Psoas muscle (tissue), 8 donors: ENCODE measurements at regions of chr5 and their contacts with region 1.

Region 1: GRCh38 chr5:45454090-45454489 is 242.1 kb downstream of the HCN1 start:
- DNase-seq: peak in 1 of 2 donors; percentile 44
- ATAC-seq: peak; percentile 92 to 100 (median 98)
- H3K4me3 ChIP-seq: no peak overlapping the region
- H3K27ac ChIP-seq: no peak overlapping the region
- H3K4me1 ChIP-seq: peaks cover 5% of the 10 kb centered on the region
- H3K27me3 ChIP-seq: no peaks in the 10 kb centered on the region
- CTCF ChIP-seq: no peak

Region 2: GRCh38 chr5:45440466-45440865 is 13.6 kb before region 1 on chr5:
- intact Hi-C with region 1: loop called in 1 of 2 experiments (anchors 1 kb)
- DNase-seq: no peak
- ATAC-seq: no peak
- H3K4me3 ChIP-seq: no peak overlapping the region
- H3K27ac ChIP-seq: peak overlapping the region; percentile 13
- H3K4me1 ChIP-seq: peaks cover 7% of the 10 kb centered on the region
- H3K27me3 ChIP-seq: no peaks in the 10 kb centered on the region
- CTCF ChIP-seq: no peak

Region 3: GRCh38 chr5:45696206-45696836 is 242.2 kb after region 1 on chr5 and contains the start of gene HCN1:
- intact Hi-C with region 1: no loop called
- DNase-seq: peak; percentile 69 to 89
- ATAC-seq: peak; percentile 97 to 100 (median 99)
- H3K4me3 ChIP-seq: peak within 1 kb of the TSS; percentile 67
- H3K27ac ChIP-seq: no peak within 1 kb of the TSS
- H3K4me1 ChIP-seq: no peaks in the 10 kb centered on the region
- H3K27me3 ChIP-seq: peaks cover 0 to 20% (median 7%) of the 10 kb centered on the region in 3 donors
- CTCF ChIP-seq: peak; percentile 74
- total RNA-seq, gene HCN1: 0.20 to 0.36 TPM in 2 of 4 donors, not detected in the others